Posterior cingulate gyrus (tissue), 11 donors: ENCODE measurements at regions of chr3 and their contacts with region 1.

Region 1: GRCh38 chr3:17645072-17645698 is 97.2 kb downstream of the TBC1D5 start:
- DNase-seq: peak in 2 of 10 donors; percentile 17 to 45

Region 2: GRCh38 chr3:17742108-17742879 is 97.1 kb after region 1 on chr3 and contains the start of gene TBC1D5:
- intact Hi-C with region 1: loop called (anchors 5 kb)
- DNase-seq: peak; percentile 52 to 99 (median 95)